Activated naive CD4-positive, alpha-beta T cell treated with anti-CD3 and anti-CD28 coated beads for 36 hours (primary cell): ENCODE measurements at regions of chrX and their contacts with region 1.

Region 1: DNA sequence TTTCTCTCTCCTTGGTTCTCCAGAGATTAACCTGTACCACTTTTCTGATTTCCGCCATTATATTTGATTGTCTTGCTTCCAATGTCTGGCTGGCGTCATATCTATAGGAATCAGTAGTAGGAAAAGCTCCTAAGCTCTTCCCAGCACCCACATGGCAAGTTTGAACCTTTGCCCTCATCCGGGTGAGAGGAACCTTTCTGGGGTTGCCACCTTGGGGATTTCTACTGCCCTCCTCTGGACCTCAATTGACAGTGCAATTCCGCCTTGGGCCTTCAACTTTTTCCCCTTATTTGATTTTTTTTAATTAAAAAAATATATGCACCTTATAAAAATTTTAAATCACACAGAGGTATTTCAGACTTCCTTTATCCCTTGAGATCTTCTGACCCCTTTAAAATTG is 2.0 kb upstream of the CXorf66 start:
- DNase-seq: peak; percentile 5
- H3K4me3 Mint-ChIP-seq: no peak overlapping the region
- H3K27ac Mint-ChIP-seq: no peak overlapping the region
- H3K4me1 Mint-ChIP-seq: no peaks in the 10 kb centered on the region
- H3K27me3 Mint-ChIP-seq: peaks cover 6% of the 10 kb centered on the region

Region 2: DNA sequence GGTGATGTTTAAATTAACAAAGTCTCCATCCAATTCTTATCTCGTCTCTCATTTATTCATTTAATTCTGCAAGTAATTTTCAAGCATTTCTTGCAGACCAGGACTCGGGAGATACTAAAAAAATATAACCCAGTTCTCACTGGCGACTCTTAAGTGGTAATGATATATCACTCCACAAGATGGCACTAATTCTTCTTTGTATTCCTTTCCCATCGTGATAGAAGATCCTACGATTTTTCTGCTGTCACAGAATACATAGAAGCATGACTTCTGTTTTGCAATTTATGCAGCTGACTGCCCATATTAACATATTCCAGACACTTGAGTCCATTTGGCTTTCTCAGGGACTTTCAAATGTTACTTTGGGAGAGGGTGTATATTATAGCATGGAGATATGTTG is 1191.8 kb before region 1 on chrX:
- CTCF ChIA-PET with region 1: no interaction called
- intact Hi-C with region 1: loop called (anchors 5 kb)
- DNase-seq: no peak
- H3K4me3 Mint-ChIP-seq: no peak overlapping the region
- H3K27ac Mint-ChIP-seq: no peak overlapping the region
- H3K4me1 Mint-ChIP-seq: no peaks in the 10 kb centered on the region
- H3K27me3 Mint-ChIP-seq: peaks cover 4% of the 10 kb centered on the region

Region 3: GRCh38 chrX:139126493-139126892 is 840.8 kb before region 1 on chrX:
- CTCF ChIA-PET with region 1: no interaction called
- intact Hi-C with region 1: loop called (anchors 10 kb)
- DNase-seq: peak; percentile 15
- H3K4me3 Mint-ChIP-seq: no peak overlapping the region
- H3K27ac Mint-ChIP-seq: no peak overlapping the region
- H3K4me1 Mint-ChIP-seq: no peaks in the 10 kb centered on the region
- H3K27me3 Mint-ChIP-seq: no peaks in the 10 kb centered on the region

Region 4: DNA sequence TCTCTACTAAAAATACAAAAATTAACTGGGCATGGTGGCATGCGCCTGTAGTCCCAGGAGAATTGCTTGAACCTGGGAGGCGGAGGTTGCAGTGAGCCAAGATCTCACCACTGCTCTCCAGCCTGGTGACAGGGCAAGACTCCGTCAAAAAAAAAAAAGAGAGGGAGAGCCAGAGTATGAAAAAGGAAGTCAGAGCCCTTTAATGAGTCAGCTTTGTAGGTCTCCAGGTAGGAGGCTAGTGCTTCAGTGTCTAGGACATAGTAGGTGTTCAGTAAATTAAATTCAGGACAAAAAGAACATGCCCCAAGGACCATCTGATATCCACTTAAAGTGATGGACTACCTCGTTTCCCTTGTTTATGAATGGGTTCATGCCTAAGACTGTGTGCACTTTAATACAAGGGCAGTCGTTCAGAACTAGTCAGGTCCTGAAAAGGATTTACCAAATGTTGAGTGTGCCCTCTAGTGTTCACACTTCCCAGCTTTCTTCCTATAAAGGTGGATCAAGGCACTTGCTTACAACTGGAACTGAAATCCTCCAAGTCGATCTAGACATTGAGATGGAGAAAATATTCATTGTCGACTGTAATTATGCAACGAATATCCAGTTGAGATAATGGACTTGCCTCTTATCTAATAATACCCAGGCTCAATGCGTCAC is 407.8 kb before region 1 on chrX:
- CTCF ChIA-PET with region 1: no interaction called
- intact Hi-C with region 1: loop called (anchors 10 kb)
- DNase-seq: peak; percentile 31
- H3K4me3 Mint-ChIP-seq: no peak overlapping the region
- H3K27ac Mint-ChIP-seq: no peak overlapping the region
- H3K4me1 Mint-ChIP-seq: peaks cover 3% of the 10 kb centered on the region
- H3K27me3 Mint-ChIP-seq: peaks cover 2% of the 10 kb centered on the region